ENCODE measurements at regions of chr3 and their contacts with region 1.

Region 1: GRCh38 chr3:62097121-62097520 is 276.2 kb downstream of the FEZF2 start:
- DNase-seq: no peak
- ATAC-seq: peak; percentile 85

Region 2: DNA sequence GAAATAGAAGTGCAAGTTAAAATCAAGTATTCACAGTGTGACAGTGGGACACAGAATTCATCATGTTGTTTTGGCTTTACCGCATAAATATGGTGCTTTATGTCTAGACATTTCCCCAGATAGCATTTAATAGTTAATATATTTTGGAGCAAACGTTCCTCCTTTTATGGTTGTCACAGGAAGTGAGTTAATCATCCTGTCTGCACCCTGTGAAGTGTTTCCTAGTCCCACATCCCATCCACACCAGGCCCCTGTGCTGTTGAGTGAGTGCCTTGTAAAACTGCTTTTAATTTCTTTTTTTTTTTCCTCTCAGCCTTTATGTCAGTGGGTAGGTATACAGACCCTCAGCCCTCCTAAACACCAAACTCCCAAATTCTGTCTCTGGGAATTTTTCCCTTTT is 117.5 kb before region 1 on chr3:
- intact Hi-C with region 1: no loop called
- DNase-seq: no peak
- ATAC-seq: no peak

Region 3: DNA sequence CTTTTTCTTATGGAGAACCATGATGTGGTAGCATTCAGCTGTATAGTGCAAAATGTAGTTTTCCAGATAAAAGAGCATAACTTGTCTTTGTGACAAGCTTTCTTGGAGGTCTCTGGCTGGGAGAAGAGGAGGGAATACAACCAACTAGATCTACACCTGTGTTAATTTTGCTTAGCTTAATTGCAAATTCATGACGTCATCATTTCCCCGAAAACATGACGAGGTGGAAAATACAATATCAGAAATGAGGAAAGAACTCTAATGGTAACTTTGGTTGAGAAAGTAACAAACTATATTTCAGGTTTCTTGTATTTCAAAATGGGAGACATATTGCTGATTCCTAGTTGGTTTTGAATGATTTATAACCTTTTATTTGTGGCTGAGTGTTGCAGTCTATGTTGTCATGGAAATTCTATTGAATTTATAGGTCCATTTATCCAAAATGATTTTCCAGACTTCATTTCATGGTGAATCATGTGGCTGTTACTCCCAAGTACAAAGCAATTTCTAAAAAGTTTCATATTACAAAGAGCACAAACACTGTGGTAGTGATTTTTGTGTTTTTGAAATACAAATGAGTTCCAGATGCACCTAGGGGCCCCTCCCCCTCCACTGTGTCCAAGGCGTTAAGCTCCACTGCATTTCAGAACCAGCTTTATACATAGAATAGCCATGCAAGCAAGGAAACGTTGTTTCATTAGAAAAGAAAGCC is 31.0 kb before region 1 on chr3:
- intact Hi-C with region 1: no loop called
- DNase-seq: no peak
- ATAC-seq: no peak

Region 4: GRCh38 chr3:62159709-62160092 is 62.6 kb after region 1 on chr3:
- intact Hi-C with region 1: loop called (anchors 5 kb)
- DNase-seq: peak; percentile 77
- ATAC-seq: peak; percentile 96

Region 5: DNA sequence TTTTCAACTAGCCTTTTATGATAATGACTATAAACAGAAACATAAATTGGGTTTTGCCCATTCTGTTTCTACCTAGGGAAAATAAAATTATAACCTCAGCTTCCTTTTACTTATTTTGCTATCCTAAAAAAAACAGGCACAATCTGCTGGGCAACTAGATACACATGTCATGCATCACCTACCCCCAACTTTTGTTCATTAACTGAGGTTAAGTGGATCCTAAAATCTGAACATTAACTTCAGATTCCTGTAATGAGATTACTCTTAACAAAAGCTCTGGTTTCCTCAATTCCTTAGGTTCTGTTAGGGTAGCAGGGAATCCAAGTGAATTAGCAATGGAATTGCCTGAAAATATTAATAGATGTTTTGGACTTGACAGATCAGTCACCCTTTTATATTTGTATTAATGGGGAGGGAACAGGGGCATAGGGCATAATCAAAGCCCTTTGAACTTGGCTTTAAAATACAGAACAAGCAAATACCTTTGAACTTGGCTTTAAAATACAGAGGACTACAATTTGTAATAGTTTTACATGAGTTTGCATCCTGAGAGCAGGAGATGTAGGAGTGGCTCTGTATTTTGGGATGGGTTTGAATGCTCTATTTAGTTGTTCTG is 169.7 kb after region 1 on chr3:
- intact Hi-C with region 1: no loop called
- DNase-seq: no peak
- ATAC-seq: no peak

Measured in Right ventricle myocardium inferior (tissue), 1 donor.